ENCODE measurements at regions of chr2 and their contacts with region 1.

Region 1: GRCh38 chr2:181953881-181954537 is 31.6 kb upstream of the PPP1R1C start:
- DNase-seq: no peak
- H3K4me3 ChIP-seq: peak overlapping the region; percentile 29
- CTCF ChIP-seq: peak; percentile 63

Region 2: DNA sequence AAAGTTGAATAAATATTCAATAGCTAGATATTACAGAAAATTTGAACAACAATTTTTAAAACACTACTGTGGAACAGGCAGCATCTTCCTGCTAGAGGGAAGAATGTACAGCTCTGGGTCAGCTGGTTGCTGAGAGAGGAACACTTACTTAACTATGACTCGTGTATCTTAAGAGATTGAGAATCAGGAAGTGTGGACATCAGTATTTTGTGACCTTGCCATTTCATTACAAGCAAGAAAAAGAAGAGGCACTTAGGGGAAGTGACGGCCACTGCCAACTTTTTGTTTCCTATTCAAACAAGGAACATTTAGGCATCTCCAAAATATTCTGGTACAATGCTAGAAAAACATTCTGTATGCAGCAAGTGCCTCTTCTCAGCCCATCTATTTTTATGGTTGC is 16.5 kb before region 1 on chr2:
- CTCF ChIA-PET with region 1: interaction called, 44 read pairs
- POLR2A ChIA-PET with region 1: no interaction called
- DNase-seq: peak; percentile 38
- H3K4me3 ChIP-seq: no peak overlapping the region
- CTCF ChIP-seq: no peak

Region 3: DNA sequence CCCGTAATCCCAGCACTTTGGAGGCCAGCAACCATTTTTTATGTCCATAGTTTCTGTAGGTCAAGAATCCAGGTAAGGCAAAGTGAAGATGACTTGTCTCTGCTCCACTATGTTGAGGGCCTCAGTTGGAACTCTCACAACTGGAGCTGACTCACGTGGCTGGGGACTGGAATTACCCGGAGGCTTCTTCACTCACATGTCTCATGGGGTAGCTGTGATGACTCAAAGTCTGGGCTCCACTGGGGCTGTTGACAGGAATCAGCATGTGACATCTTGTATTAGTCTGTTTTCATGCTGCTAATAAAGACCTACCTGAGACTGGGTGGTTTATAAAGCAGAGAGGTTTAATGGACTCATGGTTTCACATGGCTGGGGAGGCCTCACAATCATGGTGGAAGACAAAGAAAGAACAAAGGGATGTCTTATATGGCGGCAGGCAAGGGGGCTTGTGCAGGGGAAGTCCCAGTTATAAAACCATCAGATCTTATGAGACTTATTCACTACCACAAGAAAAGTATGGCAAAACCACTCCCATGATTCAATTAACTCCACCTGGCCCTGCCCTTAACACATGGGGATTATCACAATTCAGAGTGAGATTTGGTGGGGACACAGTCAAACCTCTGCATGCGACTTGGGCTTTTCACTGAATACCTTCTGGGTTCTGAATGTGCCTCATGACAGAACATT is 23.8 kb after region 1 on chr2:
- CTCF ChIA-PET with region 1: interaction called, 11 read pairs
- POLR2A ChIA-PET with region 1: no interaction called
- DNase-seq: no peak
- H3K4me3 ChIP-seq: no peak overlapping the region
- CTCF ChIP-seq: no peak

Region 4: GRCh38 chr2:181998891-181999654 is 45.1 kb after region 1 on chr2:
- CTCF ChIA-PET with region 1: interaction called, 12 read pairs
- POLR2A ChIA-PET with region 1: no interaction called
- DNase-seq: no peak
- H3K4me3 ChIP-seq: no peak overlapping the region
- CTCF ChIP-seq: no peak